Posterior vena cava (tissue), 2 donors: ENCODE measurements at regions of chr6 and their contacts with region 1.

Region 1: GRCh38 chr6:151323791-151324487 is 67.4 kb downstream of the ZBTB2 start:
- DNase-seq: peak; percentile 95

Region 2: DNA sequence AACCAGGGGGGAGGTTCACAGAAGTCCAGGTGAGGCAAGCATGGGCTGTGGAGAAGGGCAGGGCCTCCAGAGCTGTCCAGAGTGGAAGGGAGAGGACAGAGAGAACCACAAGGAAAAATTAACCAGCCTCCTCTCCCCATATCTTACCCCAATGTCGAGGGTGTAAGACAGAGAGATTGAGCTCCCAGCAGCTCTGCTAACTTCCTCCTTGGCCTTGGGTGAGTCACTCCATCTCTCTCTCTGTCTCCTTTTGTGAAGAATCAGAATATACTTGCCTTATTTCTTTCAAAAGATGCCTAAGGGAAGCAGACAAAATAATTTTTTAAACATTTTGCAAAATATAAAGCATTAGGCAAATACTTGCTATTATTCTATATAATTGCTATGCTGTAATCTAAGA is 1013.4 kb before region 1 on chr6:
- intact Hi-C with region 1: no loop called
- DNase-seq: no peak

Region 3: GRCh38 chr6:151004415-151005024 is 319.4 kb before region 1 on chr6:
- intact Hi-C with region 1: loop called in 1 of 2 experiments (anchors 2 kb)
- DNase-seq: no peak

Region 4: DNA sequence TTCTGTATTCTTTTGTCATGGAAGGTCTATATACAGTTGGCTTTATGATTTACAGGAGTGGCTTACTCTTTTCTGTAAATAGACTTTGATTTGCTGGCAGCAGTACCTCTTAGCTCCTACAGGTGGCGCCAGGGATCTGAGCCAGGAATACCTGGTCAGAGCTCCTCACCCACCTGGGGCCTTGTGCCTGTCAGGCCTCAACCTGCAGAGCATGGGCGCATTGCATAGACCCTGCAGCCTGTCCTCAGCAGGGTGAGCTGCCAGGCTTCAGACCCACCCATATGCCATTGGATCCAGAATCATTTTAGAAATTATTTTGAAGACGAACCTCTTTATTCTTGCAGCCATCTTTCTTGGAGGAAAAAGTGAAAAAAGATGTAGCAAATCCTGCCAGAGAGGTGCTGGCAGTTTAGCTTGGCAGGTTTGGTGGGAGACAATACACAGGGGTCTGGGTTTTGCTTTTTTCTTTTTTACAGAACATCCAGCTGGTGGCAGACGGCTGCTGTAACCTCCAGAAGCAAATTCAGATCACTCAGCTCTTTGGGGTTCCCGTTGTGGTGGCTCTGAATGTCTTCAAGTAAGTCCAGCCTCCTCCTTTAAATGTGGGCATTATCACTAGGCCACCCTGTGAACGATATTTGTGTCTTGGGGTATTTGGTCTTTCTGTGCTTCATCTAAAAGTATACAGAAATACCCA is 309.4 kb before region 1 on chr6:
- intact Hi-C with region 1: loop called in 1 of 2 experiments (anchors 5 kb)
- DNase-seq: no peak

Region 5: GRCh38 chr6:151021896-151022295 is 302.0 kb before region 1 on chr6:
- intact Hi-C with region 1: loop called (anchors 5 kb)
- DNase-seq: no peak

Region 6: GRCh38 chr6:151209071-151209831 is 114.7 kb before region 1 on chr6:
- intact Hi-C with region 1: no loop called
- DNase-seq: no peak

Region 7: DNA sequence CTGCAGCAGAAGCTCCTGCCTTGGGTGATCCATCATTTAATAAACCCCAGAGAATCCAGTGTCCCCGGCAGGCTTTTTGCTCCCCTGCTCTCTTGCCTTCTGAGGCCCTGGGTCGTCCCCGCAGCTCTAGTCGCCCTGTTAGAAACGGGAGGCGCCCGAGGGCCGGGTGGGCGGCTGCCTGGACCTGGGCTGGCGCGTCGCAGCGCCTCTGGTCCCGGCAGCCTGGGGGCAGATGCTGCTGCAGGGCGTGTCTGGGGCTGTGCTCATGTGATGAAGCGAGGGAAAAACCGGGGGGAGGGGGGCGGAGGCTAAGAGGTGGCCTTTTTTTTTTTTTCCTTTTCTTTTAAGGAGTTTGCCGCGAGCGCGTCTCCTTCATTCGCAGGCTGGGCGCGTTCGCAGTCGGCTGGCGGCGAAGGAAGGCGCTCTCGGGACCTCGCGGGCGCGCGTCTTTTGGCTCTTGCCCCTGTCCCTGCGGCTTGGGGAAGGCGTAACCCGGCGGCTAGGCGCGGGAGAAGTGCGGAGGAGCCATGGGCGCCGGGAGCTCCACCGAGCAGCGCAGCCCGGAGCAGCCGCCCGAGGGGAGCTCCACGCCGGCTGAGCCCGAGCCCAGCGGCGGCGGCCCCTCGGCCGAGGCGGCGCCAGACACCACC is 83.8 kb before region 1 on chr6:
- intact Hi-C with region 1: loop called (anchors 5 to 10 kb)
- DNase-seq: peak; percentile 94

Region 8: DNA sequence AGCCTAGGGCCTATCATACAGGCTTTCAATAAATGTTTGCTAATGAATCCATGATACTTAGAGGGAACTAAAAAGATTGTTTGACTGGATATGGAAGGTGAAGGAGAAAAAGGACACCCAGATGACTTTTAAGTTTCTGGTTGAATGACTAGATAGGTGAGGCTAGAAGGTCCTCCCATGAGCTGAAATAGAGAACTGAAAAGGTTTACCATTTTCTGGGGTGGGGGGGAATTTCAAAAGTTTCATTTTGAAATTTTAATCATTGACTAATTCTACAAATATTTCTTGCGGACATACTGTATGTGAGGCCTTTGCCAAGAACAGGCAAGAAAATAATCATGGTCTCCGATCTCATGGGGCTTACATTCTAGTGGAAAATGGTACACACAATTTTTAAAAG is 85.3 kb after region 1 on chr6:
- intact Hi-C with region 1: no loop called
- DNase-seq: no peak